ENCODE measurements at regions of chr11 and their contacts with region 1.

Region 1: GRCh38 chr11:5291207-5291838 is 10.4 kb downstream of the OR51B4 start:
- DNase-seq: peak; percentile 46
- ATAC-seq: peak; percentile 79
- H3K4me3 ChIP-seq: no peak overlapping the region
- H3K27ac ChIP-seq: no peak overlapping the region
- H3K4me1 ChIP-seq: no peaks in the 10 kb centered on the region
- H3K27me3 ChIP-seq: no peaks in the 10 kb centered on the region
- CTCF ChIP-seq: peak; percentile 68

Region 2: DNA sequence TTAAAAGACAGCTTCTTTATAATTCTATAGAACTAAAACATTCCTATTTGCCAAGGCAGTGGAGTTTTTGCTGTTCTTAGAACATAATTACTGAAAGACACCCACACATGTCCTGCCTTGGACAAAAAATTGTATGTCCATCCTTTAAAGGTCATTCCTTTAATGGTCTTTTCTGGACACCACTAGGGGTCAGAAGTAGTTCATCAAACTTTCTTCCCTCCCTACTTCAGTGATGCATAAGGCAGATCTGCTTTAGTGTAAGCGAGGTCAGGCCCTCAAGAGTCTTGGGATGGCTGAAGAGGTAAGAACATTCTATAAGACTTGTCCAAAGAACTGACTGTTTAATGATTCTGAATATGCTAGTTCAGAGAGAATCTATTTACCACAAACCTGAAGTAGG is 86.5 kb before region 1 on chr11:
- CTCF ChIA-PET with region 1: no interaction called
- POLR2A ChIA-PET with region 1: no interaction called
- intact Hi-C with region 1: loop called (anchors 1 kb)
- DNase-seq: peak; percentile 59
- ATAC-seq: peak; percentile 82
- H3K4me3 ChIP-seq: no peak overlapping the region
- H3K27ac ChIP-seq: no peak overlapping the region
- H3K4me1 ChIP-seq: no peaks in the 10 kb centered on the region
- H3K27me3 ChIP-seq: no peaks in the 10 kb centered on the region
- CTCF ChIP-seq: peak; percentile 62